ENCODE measurements at regions of chr5 and their contacts with region 1.

Region 1: DNA sequence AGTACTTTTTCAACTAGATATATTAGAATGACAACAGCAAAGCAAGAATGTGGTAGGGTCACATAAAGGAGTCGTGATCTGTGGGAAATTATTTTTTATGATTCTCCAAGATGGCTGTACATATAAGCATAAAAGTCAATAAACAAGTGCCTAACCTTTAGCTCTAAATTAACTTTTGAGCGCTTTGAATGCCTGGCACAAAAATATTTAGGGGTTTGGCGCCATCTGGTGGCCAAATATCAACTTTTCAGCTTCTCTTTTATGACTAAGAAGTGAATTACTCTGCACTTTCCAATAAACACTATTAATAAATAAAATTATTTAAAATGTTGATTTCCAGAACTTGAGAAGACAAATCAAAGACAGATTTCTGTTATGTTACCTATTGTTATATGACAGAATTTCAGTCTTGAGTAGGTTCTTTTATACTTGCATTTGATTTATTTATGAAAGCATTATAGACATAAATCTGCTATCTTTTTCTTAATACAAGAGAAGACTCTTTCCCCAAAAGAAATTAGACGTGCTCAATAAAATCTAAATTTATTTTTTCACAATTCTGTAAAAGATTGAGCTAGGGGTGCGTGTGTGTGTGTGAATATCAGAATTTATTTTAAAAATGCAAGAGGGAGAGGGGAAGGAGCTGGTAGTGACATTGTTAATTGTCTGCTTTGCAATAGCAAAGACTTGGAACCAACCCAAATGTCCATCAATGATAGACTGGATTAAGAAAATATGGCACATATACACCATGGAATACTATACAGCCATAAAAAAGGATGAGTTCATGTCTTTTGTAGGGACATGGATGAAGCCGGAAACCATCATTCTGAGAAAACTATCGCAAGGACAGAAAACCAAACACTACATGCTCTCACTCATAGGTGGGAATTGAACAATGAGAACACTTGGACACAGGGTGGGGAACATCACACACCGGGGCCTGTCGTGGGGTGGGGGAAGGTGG is 36.7 kb upstream of the ARRDC3 start:
- DNase-seq: peak; percentile 5
- H3K4me3 ChIP-seq: no peak overlapping the region; a peak in 1 of 4 replicates
- H3K27ac ChIP-seq: no peak overlapping the region
- H3K4me1 ChIP-seq: no peaks in the 10 kb centered on the region; a peak in 2 of 4 replicates
- H3K27me3 ChIP-seq: no peaks in the 10 kb centered on the region
- CTCF ChIP-seq: peak; percentile 81
- EP300 ChIP-seq: no peak
- RAD21 ChIP-seq: peak; percentile 84

Region 2: GRCh38 chr5:90802474-90803317 is 617.2 kb before region 1 on chr5:
- CTCF ChIA-PET with region 1: interaction called, 32 read pairs
- POLR2A ChIA-PET with region 1: no interaction called
- DNase-seq: peak; percentile 41
- H3K4me3 ChIP-seq: no peak overlapping the region
- H3K27ac ChIP-seq: no peak overlapping the region
- H3K4me1 ChIP-seq: no peaks in the 10 kb centered on the region; a peak in 1 of 4 replicates
- H3K27me3 ChIP-seq: no peaks in the 10 kb centered on the region
- CTCF ChIP-seq: peak; percentile 70
- EP300 ChIP-seq: no peak
- RAD21 ChIP-seq: peak; percentile 61

Region 3: DNA sequence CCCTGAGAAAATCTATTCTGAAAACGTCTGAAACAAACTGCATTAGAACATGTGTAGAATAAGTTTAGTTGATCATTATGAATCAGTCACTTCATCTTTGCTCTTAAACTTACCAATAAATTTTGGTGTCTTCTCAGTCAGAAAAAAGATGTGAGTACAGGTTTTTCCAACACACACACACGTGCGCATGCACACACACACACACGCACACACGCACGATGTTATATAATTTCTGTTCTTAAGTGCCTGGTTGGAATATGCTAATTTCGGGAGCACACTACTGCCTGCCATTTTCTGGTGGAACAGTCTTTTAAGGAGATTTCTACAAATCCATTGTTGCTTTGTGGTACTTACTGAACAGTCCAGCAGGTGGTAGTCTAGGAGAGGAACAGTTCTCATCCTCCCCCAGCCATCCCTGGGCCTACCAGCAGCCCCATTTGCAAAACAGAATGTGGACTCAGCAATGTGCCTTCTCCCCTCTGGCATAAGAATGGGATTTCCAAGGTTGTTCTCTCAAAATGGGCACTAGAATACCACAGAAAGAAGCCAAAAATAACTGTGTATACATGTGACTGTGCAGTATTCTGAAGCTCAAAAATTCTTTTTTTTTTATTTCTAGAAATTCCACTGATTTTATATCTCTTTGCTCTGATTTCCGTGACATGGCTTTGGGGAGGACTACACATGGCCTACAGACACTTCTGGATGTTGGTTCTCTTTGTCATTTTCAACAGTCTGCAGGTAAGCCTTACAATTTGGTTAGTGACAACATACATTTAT is 318.1 kb before region 1 on chr5:
- CTCF ChIA-PET with region 1: interaction called, 12 read pairs
- POLR2A ChIA-PET with region 1: no interaction called
- DNase-seq: peak; percentile 71
- H3K4me3 ChIP-seq: no peak overlapping the region
- H3K27ac ChIP-seq: peak overlapping the region; percentile 11 to 39; a peak in 2 of 4 replicates
- H3K4me1 ChIP-seq: peaks cover 0 to 2% of the 10 kb centered on the region in 2 experiments; a peak in 1 of 4 replicates
- H3K27me3 ChIP-seq: no peaks in the 10 kb centered on the region
- CTCF ChIP-seq: peak; percentile 82
- EP300 ChIP-seq: peak in 1 of 2 experiments; percentile 16; a peak in 1 of 4 replicates
- RAD21 ChIP-seq: peak; percentile 96

Region 4: DNA sequence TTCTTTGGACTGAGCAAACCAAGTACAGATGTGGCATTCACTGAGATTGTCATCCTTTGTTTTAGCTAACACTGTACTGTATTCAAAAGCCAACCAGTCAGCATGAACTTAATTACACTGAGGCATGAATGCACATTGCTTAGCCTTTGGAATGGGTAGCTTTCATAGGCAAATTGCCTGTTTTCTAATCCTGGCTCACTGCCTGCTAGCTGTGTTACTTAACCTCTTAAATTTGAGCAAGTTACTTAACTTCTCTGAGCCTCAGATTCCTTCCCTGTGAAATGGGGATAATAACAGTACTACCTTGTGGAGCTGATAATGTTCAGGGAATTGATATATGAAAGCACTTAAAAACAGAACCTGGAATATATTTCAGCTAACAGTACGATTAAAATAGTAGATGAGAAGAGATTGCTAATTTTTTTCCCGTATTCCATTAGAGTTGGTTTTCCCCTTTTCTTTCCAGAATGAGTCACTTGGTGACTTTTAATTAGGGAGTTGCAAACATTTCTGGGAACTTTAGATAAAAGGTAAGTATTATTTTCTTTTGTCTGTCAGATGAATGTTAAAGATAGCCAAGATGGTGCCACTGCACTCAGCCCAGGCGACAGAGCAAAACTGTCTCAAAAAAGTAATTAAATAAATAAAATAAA is 80.7 kb before region 1 on chr5:
- CTCF ChIA-PET with region 1: no interaction called
- POLR2A ChIA-PET with region 1: no interaction called
- DNase-seq: no peak
- H3K4me3 ChIP-seq: no peak overlapping the region
- H3K27ac ChIP-seq: peak overlapping the region; percentile 31 to 44
- H3K4me1 ChIP-seq: peaks cover 3 to 4% of the 10 kb centered on the region in 2 experiments; a peak in 1 of 4 replicates
- H3K27me3 ChIP-seq: no peaks in the 10 kb centered on the region
- CTCF ChIP-seq: no peak
- EP300 ChIP-seq: 0 out of 4 replicates have a peak, but pooled peaks of 1 of the 2 experiments have one; percentile 20
- RAD21 ChIP-seq: no peak

Region 5: DNA sequence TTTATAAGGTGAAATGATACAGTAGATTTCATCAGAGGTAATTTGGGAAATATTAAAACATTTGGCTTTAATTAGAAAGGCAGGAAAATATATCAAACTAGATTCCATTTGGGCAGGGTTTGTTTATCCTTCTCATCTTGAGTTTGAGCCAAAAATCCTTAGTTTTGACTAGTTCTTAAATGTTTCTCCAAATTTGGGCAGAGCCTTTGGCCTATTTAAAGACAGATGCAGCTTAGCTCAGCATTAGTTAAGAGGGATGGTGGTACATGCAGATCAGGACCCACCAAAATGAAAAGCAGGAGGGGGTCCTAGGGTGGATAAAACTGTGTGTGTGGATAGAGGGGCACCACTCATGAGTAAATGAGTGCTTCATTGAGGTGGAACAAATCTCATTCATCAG is 16.4 kb before region 1 on chr5:
- CTCF ChIA-PET with region 1: interaction called, 40 read pairs
- POLR2A ChIA-PET with region 1: no interaction called
- DNase-seq: no peak
- H3K4me3 ChIP-seq: no peak overlapping the region
- H3K27ac ChIP-seq: peak overlapping the region in 1 of 2 experiments; percentile 34; a peak in 1 of 4 replicates
- H3K4me1 ChIP-seq: no peaks in the 10 kb centered on the region; a peak in 1 of 4 replicates
- H3K27me3 ChIP-seq: no peaks in the 10 kb centered on the region
- CTCF ChIP-seq: no peak
- EP300 ChIP-seq: no peak
- RAD21 ChIP-seq: no peak

Region 6: GRCh38 chr5:91434348-91434747 is 14.5 kb after region 1 on chr5:
- CTCF ChIA-PET with region 1: interaction called, 45 read pairs
- POLR2A ChIA-PET with region 1: no interaction called
- DNase-seq: no peak
- H3K4me3 ChIP-seq: no peak overlapping the region
- H3K27ac ChIP-seq: no peak overlapping the region
- H3K4me1 ChIP-seq: no peaks in the 10 kb centered on the region
- H3K27me3 ChIP-seq: no peaks in the 10 kb centered on the region
- CTCF ChIP-seq: no peak
- EP300 ChIP-seq: no peak
- RAD21 ChIP-seq: no peak